Caco-2 (cell line): ENCODE measurements at regions of chr12 and their contacts with region 1.

Region 1: DNA sequence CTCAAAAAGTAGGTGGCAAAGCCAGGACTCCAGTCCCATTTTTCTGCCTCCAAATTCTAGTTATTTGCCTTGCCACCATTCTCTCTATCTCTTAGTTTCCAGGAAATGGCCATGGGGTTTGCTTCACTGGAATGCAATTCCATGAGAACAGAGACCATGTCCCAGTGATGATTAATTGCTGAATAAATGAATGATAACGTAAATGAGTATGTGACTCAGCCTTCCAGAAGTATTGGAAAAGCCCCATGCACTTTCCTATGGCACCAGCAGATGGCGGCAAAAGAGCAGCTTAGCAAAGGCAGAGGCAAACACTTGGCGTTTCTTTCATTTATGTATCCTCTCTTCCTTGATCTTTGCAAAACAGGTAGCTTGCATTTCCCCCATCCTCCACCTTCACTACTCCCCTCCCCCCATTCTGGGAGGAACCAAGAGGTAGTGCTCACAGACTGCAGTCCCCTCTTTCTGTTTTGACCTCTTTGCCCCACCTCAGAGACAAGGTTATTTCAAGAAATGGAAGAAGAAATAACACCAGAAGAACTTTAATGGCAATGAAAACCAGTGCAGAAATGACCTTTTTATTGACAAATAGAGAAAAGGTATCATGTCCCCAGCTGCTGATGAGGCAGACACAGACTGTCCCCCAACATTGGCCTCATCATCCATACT is 21.3 kb downstream of the TBX3 start:
- DNase-seq: peak; percentile 73 to 82
- H3K4me3 ChIP-seq: no peak overlapping the region
- H3K4me3 Mint-ChIP-seq: no peak overlapping the region
- H3K27ac Mint-ChIP-seq: peak overlapping the region; percentile 86
- H3K4me1 ChIP-seq: peaks cover 29% of the 10 kb centered on the region
- H3K4me1 Mint-ChIP-seq: peaks cover 9% of the 10 kb centered on the region
- H3K27me3 ChIP-seq: no peaks in the 10 kb centered on the region
- H3K27me3 Mint-ChIP-seq: no peaks in the 10 kb centered on the region
- CTCF ChIP-seq: peak; percentile 92 to 94

Region 2: GRCh38 chr12:114625294-114625851 is 37.3 kb before region 1 on chr12:
- CTCF ChIA-PET with region 1: interaction called, 6 read pairs
- POLR2A ChIA-PET with region 1: no interaction called
- intact Hi-C with region 1: loop called (anchors 1 kb)
- DNase-seq: peak; percentile 76 to 81
- H3K4me3 ChIP-seq: no peak overlapping the region
- H3K4me3 Mint-ChIP-seq: no peak overlapping the region
- H3K27ac Mint-ChIP-seq: peak overlapping the region; percentile 61
- H3K4me1 ChIP-seq: peaks cover 30% of the 10 kb centered on the region
- H3K4me1 Mint-ChIP-seq: peaks cover 44% of the 10 kb centered on the region
- H3K27me3 ChIP-seq: no peaks in the 10 kb centered on the region
- H3K27me3 Mint-ChIP-seq: no peaks in the 10 kb centered on the region
- CTCF ChIP-seq: peak; percentile 80 to 84

Region 3: GRCh38 chr12:115398311-115398781 is 735.7 kb after region 1 on chr12:
- CTCF ChIA-PET with region 1: interaction called, 7 read pairs
- POLR2A ChIA-PET with region 1: no interaction called
- intact Hi-C with region 1: loop called (anchors 2 kb)
- DNase-seq: peak; percentile 67 to 77
- H3K4me3 ChIP-seq: no peak overlapping the region
- H3K4me3 Mint-ChIP-seq: no peak overlapping the region
- H3K27ac Mint-ChIP-seq: peak overlapping the region; percentile 19
- H3K4me1 ChIP-seq: peaks cover 29% of the 10 kb centered on the region
- H3K4me1 Mint-ChIP-seq: peaks cover 47% of the 10 kb centered on the region
- H3K27me3 ChIP-seq: no peaks in the 10 kb centered on the region
- H3K27me3 Mint-ChIP-seq: no peaks in the 10 kb centered on the region
- CTCF ChIP-seq: peak in 1 of 2 experiments; percentile 72

Region 4: DNA sequence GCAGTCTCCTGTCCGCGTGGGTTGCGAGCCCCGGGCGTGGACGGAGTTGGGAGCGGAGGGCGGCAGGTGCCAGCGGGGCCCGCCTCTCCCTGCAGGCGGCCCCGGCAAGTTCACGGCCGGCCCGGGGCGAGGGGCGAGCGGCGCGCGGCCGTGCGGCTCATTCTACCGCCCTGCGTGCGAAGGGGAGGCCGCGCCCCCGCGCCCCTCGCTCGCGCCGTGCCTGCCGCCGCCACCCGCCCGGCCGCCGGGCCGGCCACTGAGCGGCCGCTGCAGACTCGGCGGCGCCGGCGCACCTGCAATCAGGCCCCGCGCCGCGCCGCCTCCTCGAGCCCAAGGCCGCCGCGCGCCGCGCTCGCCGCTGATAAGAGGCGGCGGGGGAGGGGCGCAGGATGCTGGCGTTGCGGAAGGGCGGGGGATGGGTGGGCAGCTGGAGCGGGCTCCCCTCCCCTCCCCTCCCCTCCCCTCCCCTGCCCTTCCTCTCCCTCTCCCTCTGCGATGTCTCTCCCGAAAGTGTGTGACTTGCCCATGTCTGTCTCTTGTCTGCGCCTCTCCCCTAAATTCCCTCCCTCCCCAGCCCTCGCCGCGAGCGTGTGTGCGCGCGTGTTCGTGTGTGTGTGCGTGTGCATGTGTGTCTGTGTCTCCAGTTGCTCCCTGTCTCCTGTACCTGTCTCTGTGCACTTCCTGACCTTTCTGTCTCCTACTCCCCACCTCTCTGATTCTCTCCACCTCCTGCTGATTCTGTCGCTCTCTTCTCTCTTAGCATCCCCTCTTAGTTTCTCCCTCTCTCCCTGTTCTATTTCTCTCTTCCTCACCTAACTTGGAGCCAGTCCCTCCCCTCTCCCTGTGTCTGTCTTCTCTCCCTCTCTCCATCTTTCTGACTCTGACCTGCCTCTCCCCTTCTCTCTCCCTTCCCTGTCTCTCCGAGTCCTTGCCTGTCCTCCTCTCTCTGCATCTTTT is 789.4 kb after region 1 on chr12:
- CTCF ChIA-PET with region 1: interaction called, 5 read pairs
- POLR2A ChIA-PET with region 1: no interaction called
- intact Hi-C with region 1: loop called (anchors 10 kb)
- DNase-seq: peak in 1 of 2 experiments; percentile 62
- H3K4me3 ChIP-seq: peak overlapping the region; percentile 39
- H3K4me3 Mint-ChIP-seq: peak overlapping the region; percentile 69
- H3K27ac Mint-ChIP-seq: no peak overlapping the region
- H3K4me1 ChIP-seq: 0 out of 2 replicates have a peak, but pooled peaks cover 16% of the 10 kb centered on the region
- H3K4me1 Mint-ChIP-seq: peaks cover 5% of the 10 kb centered on the region
- H3K27me3 ChIP-seq: no peaks in the 10 kb centered on the region
- H3K27me3 Mint-ChIP-seq: no peaks in the 10 kb centered on the region
- CTCF ChIP-seq: no peak

Region 5: DNA sequence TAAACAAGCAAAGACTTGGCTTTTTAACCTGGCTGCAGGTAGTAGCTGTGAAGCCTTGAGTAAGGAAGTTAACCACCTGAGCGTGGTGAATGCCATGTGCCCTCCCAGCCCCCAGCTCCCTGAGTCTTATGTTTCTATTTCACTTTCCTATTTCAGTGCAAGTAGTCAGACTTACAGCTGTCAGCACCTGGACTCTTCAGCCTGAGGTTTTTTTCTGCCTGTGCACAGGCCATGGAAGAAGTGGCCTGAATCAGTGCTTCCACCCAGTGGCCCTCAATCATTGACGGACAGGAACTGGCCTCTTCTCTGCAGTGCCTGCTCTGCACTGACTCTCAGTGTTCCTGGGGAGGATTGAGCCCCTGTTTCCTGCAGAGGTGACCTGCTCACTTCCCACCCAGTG is 818.5 kb after region 1 on chr12:
- CTCF ChIA-PET with region 1: no interaction called
- POLR2A ChIA-PET with region 1: no interaction called
- intact Hi-C with region 1: loop called (anchors 10 kb)
- DNase-seq: peak; percentile 21 to 37
- H3K4me3 ChIP-seq: no peak overlapping the region
- H3K4me3 Mint-ChIP-seq: no peak overlapping the region
- H3K27ac Mint-ChIP-seq: no peak overlapping the region
- H3K4me1 ChIP-seq: no peaks in the 10 kb centered on the region
- H3K4me1 Mint-ChIP-seq: no peaks in the 10 kb centered on the region
- H3K27me3 ChIP-seq: no peaks in the 10 kb centered on the region
- H3K27me3 Mint-ChIP-seq: no peaks in the 10 kb centered on the region
- CTCF ChIP-seq: no peak

Region 6: GRCh38 chr12:115752913-115753726 is 1090.5 kb after region 1 on chr12:
- CTCF ChIA-PET with region 1: interaction called, 3 read pairs
- POLR2A ChIA-PET with region 1: no interaction called
- intact Hi-C with region 1: loop called (anchors 1 kb)
- DNase-seq: peak; percentile 38 to 62
- H3K4me3 ChIP-seq: no peak overlapping the region
- H3K4me3 Mint-ChIP-seq: no peak overlapping the region
- H3K27ac Mint-ChIP-seq: no peak overlapping the region
- H3K4me1 ChIP-seq: no peaks in the 10 kb centered on the region; the same call in 1 of the 2 replicates
- H3K4me1 Mint-ChIP-seq: no peaks in the 10 kb centered on the region
- H3K27me3 ChIP-seq: no peaks in the 10 kb centered on the region
- H3K27me3 Mint-ChIP-seq: peaks cover 7% of the 10 kb centered on the region
- CTCF ChIP-seq: peak; percentile 47 to 67